ENCODE measurements at regions of chr7 and their contacts with region 1.

Region 1: GRCh38 chr7:85554236-85555178 is 367.7 kb upstream of the SEMA3D start:
- DNase-seq: no peak
- H3K4me3 ChIP-seq: no peak overlapping the region
- H3K27ac ChIP-seq: no peak overlapping the region
- H3K4me1 ChIP-seq: no peaks in the 10 kb centered on the region
- H3K27me3 ChIP-seq: no peaks in the 10 kb centered on the region
- CTCF ChIP-seq: peak; percentile 51 to 64 (median 60)
- EP300 ChIP-seq: no peak
- POLR2A ChIP-seq: no peak

Region 2: GRCh38 chr7:85054306-85054705 is 500.2 kb before region 1 on chr7:
- in situ Hi-C with region 1: loop called in 3 of 4 experiments (anchors 10 to 25 kb)
- intact Hi-C with region 1: no loop called
- DNase-seq: no peak
- H3K4me3 ChIP-seq: no peak overlapping the region
- H3K27ac ChIP-seq: no peak overlapping the region
- H3K4me1 ChIP-seq: no peaks in the 10 kb centered on the region
- H3K27me3 ChIP-seq: no peaks in the 10 kb centered on the region
- CTCF ChIP-seq: no peak
- EP300 ChIP-seq: no peak
- POLR2A ChIP-seq: no peak

Region 3: GRCh38 chr7:85205754-85206153 is 348.8 kb before region 1 on chr7:
- in situ Hi-C with region 1: no loop called
- intact Hi-C with region 1: no loop called
- DNase-seq: no peak
- H3K4me3 ChIP-seq: no peak overlapping the region
- H3K27ac ChIP-seq: no peak overlapping the region
- H3K4me1 ChIP-seq: no peaks in the 10 kb centered on the region
- H3K27me3 ChIP-seq: no peaks in the 10 kb centered on the region
- CTCF ChIP-seq: no peak
- EP300 ChIP-seq: no peak
- POLR2A ChIP-seq: no peak